Dorsolateral prefrontal cortex (tissue), 120 donors: ENCODE measurements at regions of chr19 and their contacts with region 1.

Region 1: GRCh38 chr19:13117772-13118423 is at the start of gene NACC1:
- DNase-seq: peak; percentile 79 to 96 (median 90)
- H3K4me3 ChIP-seq: peak within 1 kb of the TSS; percentile 66 to 100 (median 94)
- H3K27ac ChIP-seq: peak within 1 kb of the TSS; percentile 20 to 92 (median 78)
- H3K27me3 ChIP-seq: no peaks in the 10 kb centered on the region
- CTCF ChIP-seq: peak in 7 of 56 donors; percentile 13 to 30 (median 24)
- total RNA-seq, gene NACC1: 54.8 to 122 (median 79.3) TPM

Region 2: GRCh38 chr19:13150187-13150930 is 32.5 kb after region 1 on chr19 and contains the starts of genes IER2 and STX10:
- intact Hi-C with region 1: loop called (anchors 1 kb)
- DNase-seq: peak; percentile 92 to 97 (median 96)
- H3K4me3 ChIP-seq: peak within 1 kb of the TSS; percentile 61 to 98 (median 91)
- H3K27ac ChIP-seq: peak within 1 kb of the TSS; percentile 79 to 99 (median 96)
- H3K27me3 ChIP-seq: no peaks in the 10 kb centered on the region
- CTCF ChIP-seq: peak; percentile 31 to 81 (median 65)
- total RNA-seq, gene IER2: 15.7 to 43.8 (median 25.6) TPM
- total RNA-seq, gene STX10: 21.7 to 50.2 (median 33.8) TPM

Region 3: DNA sequence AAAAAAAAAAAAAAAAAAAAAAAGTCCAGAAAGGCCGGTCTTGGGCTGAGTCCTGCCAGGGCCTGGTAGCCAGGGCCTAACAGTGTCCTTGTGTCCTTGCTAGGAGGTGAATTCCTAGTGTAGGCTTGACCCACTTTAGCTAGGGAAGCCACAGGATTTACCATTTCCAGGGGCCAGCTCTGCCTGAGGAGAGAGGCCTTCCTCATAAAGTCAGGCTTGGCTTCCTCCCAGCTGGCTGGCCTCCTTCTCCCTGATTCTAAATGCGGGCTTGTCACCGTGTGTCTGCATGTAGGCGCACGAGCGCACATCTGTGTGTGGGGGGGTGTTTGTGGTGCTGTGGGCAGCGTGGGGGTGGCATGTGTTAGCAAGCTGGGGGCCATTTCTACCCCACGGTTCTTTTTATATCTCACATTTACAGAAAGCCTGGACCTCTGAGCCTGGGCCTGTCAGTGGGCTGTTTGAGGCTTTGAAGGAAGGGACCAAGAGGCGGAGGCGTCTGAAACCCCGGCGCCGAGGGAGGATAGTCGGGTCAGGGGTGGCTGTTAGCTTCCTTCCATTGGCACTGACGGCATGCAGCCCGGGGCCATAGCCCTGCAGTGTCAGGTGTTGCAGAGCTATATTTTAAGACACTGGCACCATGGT is 64.0 kb after region 1 on chr19:
- intact Hi-C with region 1: no loop called
- DNase-seq: peak; percentile 50 to 89 (median 76)
- H3K4me3 ChIP-seq: no peak overlapping the region
- H3K27ac ChIP-seq: peak overlapping the region in 34 of 59 donors; percentile 1 to 76 (median 36)
- H3K27me3 ChIP-seq: no peaks in the 10 kb centered on the region
- CTCF ChIP-seq: no peak